ENCODE measurements at regions of chr6 and their contacts with region 1.

Region 1: GRCh38 chr6:32984605-32985389 is 16.4 kb downstream of the BRD2 start:
- DNase-seq: peak; percentile 75
- CTCF ChIP-seq: peak; percentile 80

Region 2: DNA sequence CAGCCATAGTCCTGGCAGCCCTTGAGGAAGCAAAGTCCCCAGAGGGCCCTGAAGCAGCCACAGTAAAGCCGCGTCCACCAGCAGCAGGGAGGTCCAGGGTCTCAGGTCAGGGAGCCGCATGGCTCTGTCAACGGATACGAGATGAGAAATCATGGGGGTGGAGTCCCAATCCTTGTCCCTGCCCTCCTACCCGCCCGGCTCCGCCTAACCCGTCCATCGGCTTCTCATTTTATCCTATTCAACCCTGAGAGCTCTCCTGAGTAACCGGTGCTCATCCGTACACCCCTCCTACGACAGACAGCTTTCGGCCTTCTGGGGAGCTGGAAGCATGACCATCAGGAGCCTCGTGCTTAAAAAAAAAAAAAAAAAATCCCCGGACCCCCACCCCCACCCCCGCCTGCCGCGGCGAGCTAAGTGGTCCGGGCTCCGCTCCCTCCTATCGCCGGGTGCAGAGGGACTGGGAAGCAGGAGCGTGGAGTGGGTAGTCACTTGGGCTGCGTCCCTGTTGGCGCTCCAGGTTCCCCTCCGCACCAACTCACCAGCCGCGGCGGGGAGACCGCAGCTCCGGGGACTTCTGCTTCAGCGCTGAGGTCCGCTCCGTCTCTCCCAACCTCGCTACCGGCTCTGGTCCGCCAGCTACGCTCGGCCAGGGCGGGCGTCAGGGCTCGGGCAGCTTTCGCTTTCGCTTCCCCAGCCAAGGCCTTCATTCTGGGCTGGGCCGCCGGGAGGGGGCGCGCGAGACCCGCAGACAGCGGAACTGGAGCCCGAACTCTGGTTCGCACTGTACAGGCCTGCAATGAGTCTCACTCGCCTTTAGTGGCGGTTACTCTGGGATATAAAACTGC is 146.5 kb before region 1 on chr6 and contains the start of gene TAP2:
- CTCF ChIA-PET with region 1: interaction called, 34 read pairs
- POLR2A ChIA-PET with region 1: interaction called, 4 read pairs
- DNase-seq: peak; percentile 94
- CTCF ChIP-seq: peak; percentile 98

Region 3: GRCh38 chr6:32885698-32886286 is 99.0 kb before region 1 on chr6:
- CTCF ChIA-PET with region 1: interaction called, 111 read pairs
- POLR2A ChIA-PET with region 1: no interaction called
- DNase-seq: peak; percentile 63
- CTCF ChIP-seq: peak; percentile 50

Region 4: GRCh38 chr6:32912951-32913350 is 71.8 kb before region 1 on chr6:
- CTCF ChIA-PET with region 1: interaction called, 29 read pairs
- POLR2A ChIA-PET with region 1: no interaction called
- DNase-seq: no peak
- CTCF ChIP-seq: no peak

Region 5: DNA sequence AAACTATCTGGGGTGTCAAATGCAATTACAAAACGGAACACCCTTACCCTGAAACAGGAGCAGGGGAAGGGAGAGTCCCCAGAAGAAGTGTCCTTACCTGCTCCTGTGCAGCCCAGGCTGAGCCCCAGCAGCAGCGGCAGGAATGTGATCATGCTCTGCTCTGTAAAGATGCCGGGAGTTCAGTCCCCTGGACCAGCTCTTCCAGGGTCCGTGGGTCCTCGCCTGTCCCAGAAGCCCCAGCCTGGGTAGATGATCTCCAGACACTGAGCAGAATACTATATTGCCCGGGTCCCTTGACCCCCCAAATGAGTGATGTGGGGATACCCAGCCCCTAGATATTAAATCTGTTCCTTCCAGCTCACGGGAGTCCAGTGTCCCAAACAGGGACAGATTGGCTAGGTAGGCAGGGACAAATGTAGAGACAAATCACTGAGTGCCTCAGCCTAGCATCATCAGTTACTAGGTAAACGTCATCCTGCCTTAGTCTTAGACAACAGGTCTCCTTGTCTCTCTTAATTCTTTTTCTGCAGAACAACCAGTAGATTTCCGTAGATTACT is 44.1 kb before region 1 on chr6 and contains the start of gene HLA-DMB:
- CTCF ChIA-PET with region 1: interaction called, 167 read pairs
- POLR2A ChIA-PET with region 1: interaction called, 40 read pairs
- DNase-seq: peak; percentile 87
- CTCF ChIP-seq: no peak

Region 6: GRCh38 chr6:33000055-33000454 is 15.3 kb after region 1 on chr6:
- CTCF ChIA-PET with region 1: interaction called, 15 read pairs
- POLR2A ChIA-PET with region 1: no interaction called
- DNase-seq: peak; percentile 60
- CTCF ChIP-seq: peak; percentile 31